B cell (primary cell): ENCODE measurements at regions of chr21 and their contacts with region 1.

Region 1: DNA sequence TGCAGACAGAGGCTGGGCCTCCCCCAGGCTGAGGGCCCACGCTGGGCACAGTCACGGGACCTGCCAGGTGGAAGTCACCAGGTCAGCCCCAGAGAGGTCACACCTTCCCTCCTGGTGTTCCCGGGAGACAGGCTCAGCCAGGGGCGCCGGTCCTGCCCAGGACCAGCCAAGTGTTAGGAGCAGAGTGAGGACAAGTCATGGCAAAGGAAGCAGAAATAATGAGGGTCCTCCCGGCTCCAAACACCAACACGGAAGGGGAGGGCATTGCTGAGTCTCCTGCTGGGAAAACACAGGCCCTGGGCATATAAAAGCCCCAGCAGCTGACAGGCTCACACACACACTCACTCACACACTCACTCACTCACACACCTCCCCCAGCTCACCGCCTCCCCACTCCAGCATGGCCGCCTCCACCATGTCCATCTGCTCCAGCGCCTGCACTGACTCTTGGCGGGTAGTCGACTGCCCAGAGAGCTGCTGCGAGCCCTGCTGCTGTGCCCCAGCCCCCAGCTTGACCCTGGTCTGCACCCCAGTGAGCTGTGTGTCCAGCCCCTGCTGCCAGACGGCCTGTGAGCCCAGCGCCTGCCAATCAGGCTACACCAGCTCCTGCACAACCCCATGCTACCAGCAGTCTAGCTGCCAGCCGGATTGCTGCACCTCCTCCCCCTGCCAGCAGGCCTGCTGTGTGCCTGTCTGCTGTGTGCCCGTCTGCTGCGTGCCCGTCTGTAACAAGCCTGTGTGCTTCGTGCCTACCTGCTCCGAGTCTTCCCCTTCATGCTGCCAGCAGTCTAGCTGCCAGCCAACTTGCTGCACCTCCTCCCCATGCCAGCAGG is at the start of gene KRTAP10-10:
- DNase-seq: no peak
- ATAC-seq: no peak
- H3K4me3 ChIP-seq: no peak within 1 kb of the TSS
- H3K4me3 Mint-ChIP-seq: no peak within 1 kb of the TSS
- H3K27ac ChIP-seq: no peak within 1 kb of the TSS
- H3K27ac Mint-ChIP-seq: no peak within 1 kb of the TSS
- H3K4me1 ChIP-seq: no peaks in the 10 kb centered on the region
- H3K4me1 Mint-ChIP-seq: no peaks in the 10 kb centered on the region
- H3K27me3 ChIP-seq: peaks cover 0 to 18% (median 0%) of the 10 kb centered on the region in 4 experiments
- H3K27me3 Mint-ChIP-seq: peaks cover 31% of the 10 kb centered on the region
- CTCF ChIP-seq: no peak
- total RNA-seq, gene KRTAP10-10: not detected in 2 replicates

Region 2: GRCh38 chr21:44414291-44415072 is 222.8 kb before region 1 on chr21:
- CTCF ChIA-PET with region 1: no interaction called
- POLR2A ChIA-PET with region 1: no interaction called
- intact Hi-C with region 1: no loop called
- DNase-seq: no peak
- ATAC-seq: no peak
- H3K4me3 ChIP-seq: no peak overlapping the region
- H3K4me3 Mint-ChIP-seq: no peak overlapping the region
- H3K27ac ChIP-seq: no peak overlapping the region
- H3K27ac Mint-ChIP-seq: no peak overlapping the region
- H3K4me1 ChIP-seq: no peaks in the 10 kb centered on the region
- H3K4me1 Mint-ChIP-seq: no peaks in the 10 kb centered on the region
- H3K27me3 ChIP-seq: no peaks in the 10 kb centered on the region
- H3K27me3 Mint-ChIP-seq: no peaks in the 10 kb centered on the region
- CTCF ChIP-seq: no peak

Region 3: DNA sequence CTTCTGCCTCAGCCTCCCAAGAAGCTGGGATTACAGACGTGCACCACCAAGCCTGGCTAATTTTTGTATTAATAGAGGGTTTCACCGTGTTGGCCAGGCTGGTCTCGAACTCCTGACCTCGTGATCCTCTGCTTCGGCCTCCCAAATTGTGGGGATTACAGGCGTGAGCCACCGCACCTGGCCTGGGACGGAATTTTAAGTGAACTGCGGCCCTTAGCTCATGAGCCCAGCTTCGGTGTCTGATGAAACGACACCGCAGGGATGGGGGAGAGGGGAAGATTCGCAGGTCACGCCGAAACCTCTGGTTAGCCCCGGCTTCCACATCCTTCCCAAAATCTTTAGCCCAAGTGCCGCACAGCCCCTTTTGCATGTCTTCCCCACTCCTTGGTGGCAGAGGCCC is 142.8 kb before region 1 on chr21:
- CTCF ChIA-PET with region 1: no interaction called
- POLR2A ChIA-PET with region 1: interaction called, 13 read pairs
- intact Hi-C with region 1: no loop called
- DNase-seq: no peak
- ATAC-seq: no peak
- H3K4me3 ChIP-seq: no peak overlapping the region
- H3K4me3 Mint-ChIP-seq: no peak overlapping the region
- H3K27ac ChIP-seq: no peak overlapping the region
- H3K27ac Mint-ChIP-seq: no peak overlapping the region
- H3K4me1 ChIP-seq: no peaks in the 10 kb centered on the region
- H3K4me1 Mint-ChIP-seq: no peaks in the 10 kb centered on the region
- H3K27me3 ChIP-seq: peaks cover 0 to 12% (median 0%) of the 10 kb centered on the region in 4 experiments
- H3K27me3 Mint-ChIP-seq: peaks cover 42% of the 10 kb centered on the region
- CTCF ChIP-seq: no peak

Region 4: DNA sequence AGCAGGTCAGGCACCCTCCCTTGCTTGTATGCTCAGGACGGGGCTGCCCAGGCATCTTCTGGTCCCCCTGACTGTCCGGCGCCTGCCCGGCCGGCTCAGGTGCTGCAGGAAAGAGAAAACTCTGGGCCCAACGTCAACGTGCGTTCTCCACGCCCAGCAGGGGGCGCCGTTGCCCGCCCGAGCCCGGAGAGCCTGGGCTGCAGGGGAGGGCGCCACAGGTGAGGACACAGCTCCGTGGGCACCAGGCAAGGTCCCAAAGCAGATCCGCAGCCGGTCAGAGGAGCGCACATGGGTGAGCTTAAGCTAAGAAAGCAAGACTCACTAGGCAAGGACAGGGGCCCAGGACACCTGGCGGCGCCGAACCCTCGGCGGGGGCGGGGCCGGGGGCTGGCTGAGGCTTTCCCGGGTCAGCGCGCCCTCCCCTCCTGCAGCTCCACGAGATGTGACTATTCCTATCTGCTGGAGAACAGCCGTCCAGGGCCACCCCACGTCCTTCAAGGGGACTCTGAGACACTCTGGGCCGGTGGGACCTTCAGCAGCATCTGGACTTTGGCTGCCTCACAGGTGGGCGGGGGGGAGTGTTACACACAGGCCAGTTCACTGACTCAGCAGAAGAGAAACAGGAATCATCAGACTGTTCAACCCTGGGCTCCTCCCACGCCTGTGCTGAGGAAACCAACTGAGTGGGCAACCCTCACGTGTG is 126.6 kb before region 1 on chr21:
- CTCF ChIA-PET with region 1: no interaction called
- POLR2A ChIA-PET with region 1: no interaction called
- intact Hi-C with region 1: no loop called
- DNase-seq: peak; percentile 77
- ATAC-seq: peak; percentile 79
- H3K4me3 ChIP-seq: peak overlapping the region in 3 of 5 experiments; percentile 11 to 35 (median 35)
- H3K4me3 Mint-ChIP-seq: peak overlapping the region; percentile 19
- H3K27ac ChIP-seq: no peak overlapping the region
- H3K27ac Mint-ChIP-seq: no peak overlapping the region
- H3K4me1 ChIP-seq: peaks cover 9 to 11% of the 10 kb centered on the region in 2 donors
- H3K4me1 Mint-ChIP-seq: peaks cover 7% of the 10 kb centered on the region
- H3K27me3 ChIP-seq: peaks cover 0 to 9% (median 4%) of the 10 kb centered on the region in 4 experiments
- H3K27me3 Mint-ChIP-seq: peaks cover 10% of the 10 kb centered on the region
- CTCF ChIP-seq: peak; percentile 85